BJ (cell line): ENCODE measurements at regions of chrX and their contacts with region 1.

Region 1: DNA sequence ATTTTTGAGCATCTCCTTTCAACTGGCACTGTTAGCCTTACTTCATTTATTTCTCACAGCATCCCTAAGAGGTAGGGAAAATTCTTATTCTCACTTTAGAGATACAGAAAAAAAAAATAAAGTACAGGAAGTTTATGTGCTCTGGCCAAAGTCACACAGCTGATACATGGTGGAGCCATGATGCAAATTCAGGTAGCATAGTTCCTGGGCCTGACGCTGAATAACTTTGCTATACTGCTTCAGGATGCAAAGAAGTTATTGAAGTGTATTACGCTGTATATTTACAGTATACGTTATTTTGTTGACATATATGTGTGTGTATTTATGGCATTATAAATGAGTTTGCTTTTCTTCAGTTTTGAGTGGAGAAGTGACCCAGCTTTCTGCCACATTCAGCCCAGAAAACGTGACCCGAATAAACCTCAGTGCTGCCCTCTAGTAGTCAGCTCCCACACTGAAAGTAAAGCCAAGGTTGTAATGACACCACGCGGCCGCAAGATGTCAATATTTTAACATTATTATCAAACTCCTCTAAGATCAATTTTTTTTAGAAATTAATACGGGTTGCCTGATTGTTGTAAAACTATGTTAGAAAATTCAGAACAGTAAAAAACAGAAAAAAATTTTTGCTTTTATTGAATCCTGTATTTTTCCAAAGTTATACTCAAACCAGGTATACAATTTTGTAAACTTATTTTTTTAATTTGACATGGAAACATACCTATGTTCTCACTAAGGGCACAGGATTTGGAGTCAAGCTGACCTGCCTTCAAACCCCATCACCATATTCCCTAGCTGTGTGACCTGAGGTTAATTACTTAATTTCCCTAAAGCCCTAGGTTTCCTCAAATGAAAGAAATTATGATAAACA is 3.8 kb upstream of the GUCY2F start:
- DNase-seq: peak; percentile 15
- H3K4me3 ChIP-seq: no peak overlapping the region
- H3K27me3 ChIP-seq: no peaks in the 10 kb centered on the region
- CTCF ChIP-seq: peak; percentile 76

Region 2: GRCh38 chrX:109475174-109475891 is 10.4 kb before region 1 on chrX:
- CTCF ChIA-PET with region 1: interaction called, 22 read pairs
- POLR2A ChIA-PET with region 1: no interaction called
- DNase-seq: no peak
- H3K4me3 ChIP-seq: no peak overlapping the region
- H3K27me3 ChIP-seq: no peaks in the 10 kb centered on the region
- CTCF ChIP-seq: peak; percentile 50

Region 3: GRCh38 chrX:109760241-109760922 is 274.7 kb after region 1 on chrX:
- CTCF ChIA-PET with region 1: no interaction called
- POLR2A ChIA-PET with region 1: no interaction called
- DNase-seq: no peak
- H3K4me3 ChIP-seq: no peak overlapping the region
- H3K27me3 ChIP-seq: no peaks in the 10 kb centered on the region
- CTCF ChIP-seq: no peak